ENCODE measurements at regions of chr12 and their contacts with region 1.

Region 1: GRCh38 chr12:6470375-6471163 is at the start of gene VAMP1:
- DNase-seq: peak; percentile 95 to 99 (median 97)
- ATAC-seq: peak; percentile 87
- H3K4me3 ChIP-seq: peak within 1 kb of the TSS; percentile 94
- H3K4me3 Mint-ChIP-seq: peak within 1 kb of the TSS; percentile 94
- H3K27ac ChIP-seq: peak within 1 kb of the TSS; percentile 72 to 73
- H3K27ac Mint-ChIP-seq: peak within 1 kb of the TSS; percentile 92
- H3K4me1 ChIP-seq: peaks cover 50% of the 10 kb centered on the region
- H3K4me1 Mint-ChIP-seq: peaks cover 63% of the 10 kb centered on the region
- H3K27me3 ChIP-seq: no peaks in the 10 kb centered on the region
- H3K27me3 Mint-ChIP-seq: no peaks in the 10 kb centered on the region
- CTCF ChIP-seq: no peak
- total RNA-seq, gene VAMP1: 84.8 to 87.7 TPM

Region 2: DNA sequence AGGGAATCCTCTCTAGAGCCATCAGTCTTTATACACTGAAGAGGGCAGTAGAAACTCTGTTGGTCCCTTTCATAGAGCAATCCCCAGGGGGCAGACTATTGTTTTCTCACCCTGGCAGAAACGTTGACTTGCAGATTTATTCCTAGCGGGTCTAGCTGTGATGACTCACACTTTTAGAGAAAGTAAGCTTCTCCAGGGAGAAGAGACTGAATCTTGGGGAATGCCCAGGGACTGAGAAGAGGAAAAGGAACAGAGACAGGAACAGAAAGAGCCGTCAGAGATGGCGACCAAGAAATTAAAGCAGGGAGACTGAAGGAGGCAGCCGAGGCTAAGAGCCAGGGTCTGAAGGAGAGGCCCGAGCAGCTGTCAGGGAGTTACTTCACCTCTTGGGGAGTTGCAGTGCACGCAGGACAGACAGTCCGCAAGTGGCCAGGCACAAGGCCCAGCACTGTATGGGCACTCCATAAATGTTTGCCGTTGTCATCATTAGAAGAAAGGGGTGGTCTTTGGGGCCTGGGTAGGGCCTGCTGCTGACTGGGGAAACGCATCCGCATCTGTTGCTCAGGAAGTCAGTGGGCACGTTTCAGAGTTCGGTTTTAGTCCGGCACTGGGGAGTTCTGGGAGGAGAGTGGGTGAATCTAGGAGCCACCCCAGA is 147.1 kb before region 1 on chr12:
- CTCF ChIA-PET with region 1: interaction called, 10 read pairs
- POLR2A ChIA-PET with region 1: interaction called, 10 read pairs
- intact Hi-C with region 1: no loop called
- DNase-seq: peak in 7 of 14 experiments; percentile 18 to 83 (median 63)
- ATAC-seq: peak; percentile 89
- H3K4me3 ChIP-seq: peak overlapping the region; percentile 12
- H3K4me3 Mint-ChIP-seq: peak overlapping the region; percentile 86
- H3K27ac ChIP-seq: peak overlapping the region; percentile 12 to 13
- H3K27ac Mint-ChIP-seq: peak overlapping the region; percentile 85
- H3K4me1 ChIP-seq: peaks cover 45% of the 10 kb centered on the region
- H3K4me1 Mint-ChIP-seq: peaks cover 60% of the 10 kb centered on the region
- H3K27me3 ChIP-seq: no peaks in the 10 kb centered on the region
- H3K27me3 Mint-ChIP-seq: no peaks in the 10 kb centered on the region
- CTCF ChIP-seq: peak; percentile 72

Region 3: DNA sequence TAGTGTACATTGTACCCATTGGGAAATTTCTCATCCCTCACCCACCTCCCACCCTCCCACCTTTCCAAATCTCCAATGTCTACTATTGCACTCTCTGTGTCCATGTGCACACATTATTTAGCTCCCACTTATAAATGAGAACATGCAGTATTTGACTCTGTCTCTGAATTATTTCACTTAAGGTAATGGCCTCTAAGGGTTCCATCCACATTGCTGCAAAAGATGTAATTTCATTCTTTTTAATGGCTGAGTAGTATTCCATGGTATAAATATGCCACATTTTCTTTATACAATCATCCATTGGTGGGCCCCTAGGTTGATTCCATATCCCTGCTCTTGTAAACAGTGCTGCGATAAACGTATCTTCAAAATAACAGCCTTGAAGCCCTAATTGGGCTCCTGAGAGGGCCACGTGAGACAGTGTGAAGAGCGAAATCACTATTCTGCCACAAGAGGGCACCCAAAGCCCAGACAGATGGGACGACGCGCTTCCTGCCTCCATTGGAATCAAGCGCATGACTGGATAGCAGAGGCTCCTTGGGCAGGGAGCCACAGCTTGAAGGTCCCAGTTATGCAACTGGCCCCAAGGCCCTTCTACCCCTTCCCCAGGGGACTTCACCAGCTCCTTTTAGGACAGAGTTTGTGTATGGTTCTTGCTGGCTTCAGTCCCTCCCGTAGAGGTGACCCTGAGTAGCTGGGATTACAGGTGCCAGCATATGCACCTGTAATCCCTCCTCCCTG is 47.1 kb before region 1 on chr12:
- CTCF ChIA-PET with region 1: interaction called, 61 read pairs
- POLR2A ChIA-PET with region 1: interaction called, 99 read pairs
- intact Hi-C with region 1: loop called (anchors 1 kb)
- DNase-seq: peak; percentile 58 to 94 (median 67)
- ATAC-seq: peak; percentile 73
- H3K4me3 ChIP-seq: no peak overlapping the region
- H3K4me3 Mint-ChIP-seq: peak overlapping the region; percentile 36
- H3K27ac ChIP-seq: peak overlapping the region in 1 of 2 donors; percentile 29
- H3K27ac Mint-ChIP-seq: peak overlapping the region; percentile 65
- H3K4me1 ChIP-seq: peaks cover 43% of the 10 kb centered on the region
- H3K4me1 Mint-ChIP-seq: peaks cover 32% of the 10 kb centered on the region
- H3K27me3 ChIP-seq: no peaks in the 10 kb centered on the region
- H3K27me3 Mint-ChIP-seq: no peaks in the 10 kb centered on the region
- CTCF ChIP-seq: peak; percentile 75

Region 4: DNA sequence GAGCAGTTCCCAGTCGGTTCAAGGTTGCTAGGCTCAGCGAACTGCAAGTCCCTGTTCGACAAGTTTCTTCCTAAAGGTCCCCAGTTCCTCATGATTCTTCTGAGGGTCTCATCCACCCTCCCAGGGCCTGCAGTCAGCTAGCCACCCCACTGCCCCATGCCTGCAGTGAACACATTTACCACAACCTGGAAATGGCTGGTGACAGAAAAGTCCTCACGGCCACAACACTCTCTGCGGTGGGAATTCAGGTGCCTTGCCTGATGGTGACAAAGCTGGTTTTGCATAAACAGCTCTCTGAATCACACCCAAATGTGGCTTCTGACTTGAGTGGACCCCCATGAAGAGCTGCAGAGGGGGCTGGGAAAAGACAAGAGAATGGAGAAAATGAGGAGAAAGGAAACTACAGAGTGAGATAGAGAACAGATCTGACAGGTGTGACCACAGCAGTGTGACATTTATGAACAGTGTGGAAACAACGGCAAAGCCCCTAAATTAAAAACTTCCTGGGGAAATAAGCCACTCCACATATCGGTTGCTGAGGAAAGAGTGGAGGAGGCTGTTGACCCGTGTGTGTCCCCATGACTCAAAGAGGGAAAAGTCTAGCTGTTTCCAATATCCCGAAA is 27.1 kb before region 1 on chr12:
- CTCF ChIA-PET with region 1: interaction called, 27 read pairs
- POLR2A ChIA-PET with region 1: interaction called, 203 read pairs
- intact Hi-C with region 1: no loop called
- DNase-seq: peak in 3 of 14 experiments; percentile 32 to 47 (median 44)
- ATAC-seq: no peak
- H3K4me3 ChIP-seq: no peak overlapping the region
- H3K4me3 Mint-ChIP-seq: peak overlapping the region; percentile 98
- H3K27ac ChIP-seq: peak overlapping the region; percentile 64 to 65
- H3K27ac Mint-ChIP-seq: peak overlapping the region; percentile 97
- H3K4me1 ChIP-seq: peaks cover 56% of the 10 kb centered on the region
- H3K4me1 Mint-ChIP-seq: peaks cover 63% of the 10 kb centered on the region
- H3K27me3 ChIP-seq: no peaks in the 10 kb centered on the region
- H3K27me3 Mint-ChIP-seq: no peaks in the 10 kb centered on the region
- CTCF ChIP-seq: no peak

Region 5: GRCh38 chr12:6493497-6494257 is 23.1 kb after region 1 on chr12 and contains the start of gene NCAPD2:
- CTCF ChIA-PET with region 1: interaction called, 12 read pairs
- POLR2A ChIA-PET with region 1: interaction called, 76 read pairs
- intact Hi-C with region 1: loop called (anchors 1 kb)
- DNase-seq: peak; percentile 87 to 98 (median 92)
- ATAC-seq: peak; percentile 84
- H3K4me3 ChIP-seq: peak within 1 kb of the TSS; percentile 96
- H3K4me3 Mint-ChIP-seq: peak within 1 kb of the TSS; percentile 93
- H3K27ac ChIP-seq: peak within 1 kb of the TSS; percentile 89 to 94
- H3K27ac Mint-ChIP-seq: peak within 1 kb of the TSS; percentile 91
- H3K4me1 ChIP-seq: peaks cover 34% of the 10 kb centered on the region
- H3K4me1 Mint-ChIP-seq: peaks cover 48% of the 10 kb centered on the region
- H3K27me3 ChIP-seq: no peaks in the 10 kb centered on the region
- H3K27me3 Mint-ChIP-seq: no peaks in the 10 kb centered on the region
- CTCF ChIP-seq: no peak
- total RNA-seq, gene NCAPD2: 13.7 to 14.9 TPM

Region 6: DNA sequence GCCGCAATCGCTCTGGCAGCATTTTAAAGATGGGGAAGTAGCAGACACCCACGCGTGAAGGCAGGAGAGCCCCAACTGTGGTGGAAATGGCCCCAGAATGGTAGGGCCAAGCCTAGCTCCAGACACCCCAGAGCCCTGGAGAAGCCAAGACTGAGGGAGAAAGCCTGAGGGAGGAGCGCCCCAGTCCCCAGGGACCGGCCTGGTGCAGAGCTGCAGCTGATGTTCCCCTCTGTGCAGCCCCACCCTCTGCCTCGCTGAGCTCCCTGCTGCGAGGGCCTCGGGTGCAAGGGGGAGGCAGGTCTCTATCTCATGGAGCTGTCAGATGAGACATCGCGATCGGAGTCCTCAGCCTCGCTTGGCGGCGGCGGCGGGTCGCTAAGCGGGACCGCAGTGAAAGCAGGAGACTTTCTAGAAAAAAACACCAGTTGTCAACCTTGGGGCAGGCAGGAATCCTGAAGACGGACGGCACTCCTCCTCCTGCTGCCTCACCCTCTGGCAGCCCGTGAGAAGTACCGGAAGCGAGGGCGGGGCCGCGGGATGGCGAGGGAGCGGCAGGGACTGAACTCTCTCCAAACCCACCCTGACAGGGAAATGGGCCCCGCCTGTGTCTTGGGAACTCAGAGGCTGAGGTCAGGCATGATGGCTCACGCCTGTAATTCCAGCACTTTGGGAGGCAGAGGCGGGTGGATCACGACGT is 69.8 kb after region 1 on chr12:
- CTCF ChIA-PET with region 1: interaction called, 31 read pairs
- POLR2A ChIA-PET with region 1: interaction called, 58 read pairs
- intact Hi-C with region 1: loop called (anchors 1 to 2 kb)
- DNase-seq: peak in 10 of 14 experiments; percentile 33 to 67 (median 54)
- ATAC-seq: peak; percentile 37
- H3K4me3 ChIP-seq: peak overlapping the region; percentile 26
- H3K4me3 Mint-ChIP-seq: peak overlapping the region; percentile 84
- H3K27ac ChIP-seq: no peak overlapping the region
- H3K27ac Mint-ChIP-seq: peak overlapping the region; percentile 90
- H3K4me1 ChIP-seq: peaks cover 72% of the 10 kb centered on the region
- H3K4me1 Mint-ChIP-seq: peaks cover 59% of the 10 kb centered on the region
- H3K27me3 ChIP-seq: no peaks in the 10 kb centered on the region
- H3K27me3 Mint-ChIP-seq: no peaks in the 10 kb centered on the region
- CTCF ChIP-seq: no peak

Region 7: DNA sequence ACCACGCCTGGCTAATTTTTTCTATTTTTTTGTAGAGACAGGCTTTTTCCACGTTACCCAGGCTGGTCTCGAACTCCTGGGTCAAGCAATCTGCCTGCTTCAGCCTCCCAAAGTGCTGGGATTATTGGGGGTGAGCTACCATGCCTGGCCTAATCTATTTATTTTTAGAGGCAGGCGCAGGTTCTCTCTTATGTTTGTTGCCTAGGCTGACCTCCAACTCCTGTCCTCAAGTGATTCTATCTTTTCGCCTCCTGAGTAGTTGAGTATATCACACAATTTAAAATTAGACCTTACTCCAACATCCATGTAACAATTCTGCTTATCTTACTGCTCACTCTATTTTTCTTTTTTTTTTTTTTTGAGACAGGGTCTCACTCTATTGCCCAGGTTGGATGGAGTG is 183.4 kb after region 1 on chr12:
- CTCF ChIA-PET with region 1: no interaction called
- POLR2A ChIA-PET with region 1: no interaction called
- intact Hi-C with region 1: no loop called
- DNase-seq: no peak
- ATAC-seq: no peak
- H3K4me3 ChIP-seq: no peak overlapping the region
- H3K4me3 Mint-ChIP-seq: no peak overlapping the region
- H3K27ac ChIP-seq: no peak overlapping the region
- H3K27ac Mint-ChIP-seq: no peak overlapping the region
- H3K4me1 ChIP-seq: peaks cover 8% of the 10 kb centered on the region
- H3K4me1 Mint-ChIP-seq: peaks cover 14% of the 10 kb centered on the region
- H3K27me3 ChIP-seq: no peaks in the 10 kb centered on the region
- H3K27me3 Mint-ChIP-seq: no peaks in the 10 kb centered on the region
- CTCF ChIP-seq: no peak

Measured in CD4-positive, alpha-beta T cell (primary cell).